ENCODE measurements at regions of chr15 and their contacts with region 1.

Region 1: DNA sequence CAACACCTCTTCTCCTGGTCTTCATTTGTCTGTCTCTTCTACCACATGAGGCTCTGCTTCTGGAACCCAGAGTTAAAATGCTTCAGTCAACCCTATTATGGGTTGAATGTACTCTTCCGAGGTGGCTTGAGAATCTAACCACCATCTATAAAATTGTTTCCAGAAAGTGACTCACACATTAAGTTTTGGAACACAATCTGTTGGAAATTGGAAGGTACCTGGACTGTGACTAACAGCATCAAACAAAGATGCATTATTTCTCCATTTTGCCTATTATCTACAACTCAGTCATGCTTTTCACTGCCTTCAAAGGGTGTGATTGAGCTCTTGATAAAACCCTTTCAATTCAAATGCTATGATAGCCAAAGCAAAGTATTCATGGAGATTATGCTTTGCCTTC is 499.0 kb upstream of the SEMA6D start:
- DNase-seq: no peak
- ATAC-seq: no peak
- H3K4me3 ChIP-seq: no peak overlapping the region
- H3K4me3 Mint-ChIP-seq: no peak overlapping the region
- H3K27ac ChIP-seq: no peak overlapping the region
- H3K27ac Mint-ChIP-seq: no peak overlapping the region
- H3K4me1 ChIP-seq: no peaks in the 10 kb centered on the region
- H3K4me1 Mint-ChIP-seq: no peaks in the 10 kb centered on the region
- H3K27me3 ChIP-seq: no peaks in the 10 kb centered on the region
- H3K27me3 Mint-ChIP-seq: no peaks in the 10 kb centered on the region
- CTCF ChIP-seq: no peak

Region 2: GRCh38 chr15:46778875-46779274 is 439.4 kb before region 1 on chr15:
- CTCF ChIA-PET with region 1: no interaction called
- POLR2A ChIA-PET with region 1: no interaction called
- intact Hi-C with region 1: no loop called
- DNase-seq: no peak
- ATAC-seq: no peak
- H3K4me3 ChIP-seq: no peak overlapping the region
- H3K4me3 Mint-ChIP-seq: no peak overlapping the region
- H3K27ac ChIP-seq: no peak overlapping the region
- H3K27ac Mint-ChIP-seq: no peak overlapping the region
- H3K4me1 ChIP-seq: no peaks in the 10 kb centered on the region
- H3K4me1 Mint-ChIP-seq: no peaks in the 10 kb centered on the region
- H3K27me3 ChIP-seq: no peaks in the 10 kb centered on the region
- H3K27me3 Mint-ChIP-seq: no peaks in the 10 kb centered on the region
- CTCF ChIP-seq: no peak

Region 3: DNA sequence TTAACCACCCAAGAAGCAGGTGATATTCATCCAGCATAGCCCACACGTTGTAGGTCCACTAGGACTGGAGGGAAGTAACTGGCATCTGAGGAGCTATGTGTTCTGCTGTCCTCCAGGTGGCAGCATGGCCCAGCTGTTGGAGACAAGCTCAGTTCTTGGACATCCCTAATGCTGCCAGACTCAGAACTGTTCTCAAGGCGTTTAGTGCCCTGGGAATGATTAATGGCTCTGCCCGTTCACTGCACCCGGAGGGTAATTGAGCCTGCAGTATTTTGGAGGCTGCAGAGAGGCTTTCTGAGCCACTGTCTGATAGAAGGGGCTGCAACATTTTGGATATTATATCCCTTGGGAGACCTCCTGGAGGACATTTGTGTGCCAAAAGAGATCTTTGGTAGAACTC is 22.2 kb before region 1 on chr15:
- CTCF ChIA-PET with region 1: no interaction called
- POLR2A ChIA-PET with region 1: no interaction called
- intact Hi-C with region 1: loop called in 1 of 2 experiments (anchors 2 kb)
- DNase-seq: peak in 12 of 14 experiments; percentile 2 to 55 (median 25)
- ATAC-seq: no peak
- H3K4me3 ChIP-seq: no peak overlapping the region
- H3K4me3 Mint-ChIP-seq: no peak overlapping the region
- H3K27ac ChIP-seq: no peak overlapping the region
- H3K27ac Mint-ChIP-seq: no peak overlapping the region
- H3K4me1 ChIP-seq: no peaks in the 10 kb centered on the region
- H3K4me1 Mint-ChIP-seq: no peaks in the 10 kb centered on the region
- H3K27me3 ChIP-seq: no peaks in the 10 kb centered on the region
- H3K27me3 Mint-ChIP-seq: no peaks in the 10 kb centered on the region
- CTCF ChIP-seq: no peak

Region 4: DNA sequence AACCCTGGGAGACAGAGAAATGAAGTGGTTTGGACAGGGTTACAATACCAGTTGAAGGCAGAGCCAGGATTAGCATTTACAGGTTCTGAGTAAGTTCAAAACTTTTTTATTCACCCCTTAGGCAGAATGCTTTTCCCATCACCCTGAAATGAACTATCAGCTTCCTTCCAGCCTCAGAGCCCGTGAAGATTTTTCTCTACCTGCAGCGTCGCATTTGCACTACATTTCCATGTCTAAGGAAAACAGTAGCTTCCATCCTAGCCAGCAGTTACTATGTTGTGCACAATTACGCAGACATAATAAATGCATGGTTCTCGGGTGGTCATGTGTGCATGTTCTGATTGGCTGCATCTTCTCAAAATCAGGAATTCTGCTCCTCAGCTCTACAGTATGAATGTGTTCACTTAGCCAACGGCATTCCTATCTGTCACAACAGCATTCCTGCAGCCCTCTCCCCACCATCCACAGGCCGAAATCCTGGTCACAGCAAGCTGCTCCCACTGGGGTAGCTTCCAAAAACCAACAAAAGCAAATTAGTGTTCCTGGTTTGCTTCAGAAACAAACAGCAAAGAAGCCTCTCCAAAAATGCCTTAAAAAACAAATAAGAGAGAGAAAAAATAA is 11.8 kb before region 1 on chr15:
- CTCF ChIA-PET with region 1: no interaction called
- POLR2A ChIA-PET with region 1: no interaction called
- intact Hi-C with region 1: no loop called
- DNase-seq: no peak
- ATAC-seq: no peak
- H3K4me3 ChIP-seq: no peak overlapping the region
- H3K4me3 Mint-ChIP-seq: no peak overlapping the region
- H3K27ac ChIP-seq: no peak overlapping the region
- H3K27ac Mint-ChIP-seq: no peak overlapping the region
- H3K4me1 ChIP-seq: no peaks in the 10 kb centered on the region
- H3K4me1 Mint-ChIP-seq: no peaks in the 10 kb centered on the region
- H3K27me3 ChIP-seq: no peaks in the 10 kb centered on the region
- H3K27me3 Mint-ChIP-seq: no peaks in the 10 kb centered on the region
- CTCF ChIP-seq: no peak

Region 5: DNA sequence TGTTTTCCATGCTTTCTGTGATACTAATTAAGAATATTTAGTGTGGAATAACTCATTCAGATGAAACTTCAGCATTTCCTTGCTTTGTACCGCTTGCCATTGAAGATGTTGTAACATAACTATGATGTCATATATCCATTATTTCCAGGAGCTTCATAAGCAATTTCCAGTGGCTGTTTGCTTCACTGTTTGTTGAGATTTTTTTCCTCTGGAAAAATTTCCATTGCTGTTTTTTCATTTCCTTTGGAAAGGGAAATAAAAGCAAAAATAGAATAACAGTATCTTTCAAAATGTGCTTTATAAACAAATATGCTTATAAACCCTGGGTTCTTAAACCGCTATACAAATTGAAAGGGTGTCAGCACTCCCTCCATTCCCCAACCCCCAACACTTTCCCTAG is 179.4 kb after region 1 on chr15:
- CTCF ChIA-PET with region 1: no interaction called
- POLR2A ChIA-PET with region 1: no interaction called
- intact Hi-C with region 1: no loop called
- DNase-seq: no peak
- ATAC-seq: no peak
- H3K4me3 ChIP-seq: no peak overlapping the region
- H3K4me3 Mint-ChIP-seq: no peak overlapping the region
- H3K27ac ChIP-seq: no peak overlapping the region
- H3K27ac Mint-ChIP-seq: no peak overlapping the region
- H3K4me1 ChIP-seq: no peaks in the 10 kb centered on the region
- H3K4me1 Mint-ChIP-seq: no peaks in the 10 kb centered on the region
- H3K27me3 ChIP-seq: no peaks in the 10 kb centered on the region
- H3K27me3 Mint-ChIP-seq: no peaks in the 10 kb centered on the region
- CTCF ChIP-seq: no peak

Measured in CD4-positive, alpha-beta T cell (primary cell).